Vagina (tissue), 2 donors: ENCODE measurements at regions of chr14 and their contacts with region 1.

Region 1: GRCh38 chr14:69818757-69819191 is 21.7 kb upstream of the SLC10A1 start:
- DNase-seq: no peak
- H3K4me3 ChIP-seq: no peak overlapping the region
- H3K27ac ChIP-seq: no peak overlapping the region
- H3K4me1 ChIP-seq: no peaks in the 10 kb centered on the region
- H3K27me3 ChIP-seq: no peaks in the 10 kb centered on the region
- CTCF ChIP-seq: peak; percentile 62 to 86 (median 83)
- POLR2A ChIP-seq: no peak

Region 2: DNA sequence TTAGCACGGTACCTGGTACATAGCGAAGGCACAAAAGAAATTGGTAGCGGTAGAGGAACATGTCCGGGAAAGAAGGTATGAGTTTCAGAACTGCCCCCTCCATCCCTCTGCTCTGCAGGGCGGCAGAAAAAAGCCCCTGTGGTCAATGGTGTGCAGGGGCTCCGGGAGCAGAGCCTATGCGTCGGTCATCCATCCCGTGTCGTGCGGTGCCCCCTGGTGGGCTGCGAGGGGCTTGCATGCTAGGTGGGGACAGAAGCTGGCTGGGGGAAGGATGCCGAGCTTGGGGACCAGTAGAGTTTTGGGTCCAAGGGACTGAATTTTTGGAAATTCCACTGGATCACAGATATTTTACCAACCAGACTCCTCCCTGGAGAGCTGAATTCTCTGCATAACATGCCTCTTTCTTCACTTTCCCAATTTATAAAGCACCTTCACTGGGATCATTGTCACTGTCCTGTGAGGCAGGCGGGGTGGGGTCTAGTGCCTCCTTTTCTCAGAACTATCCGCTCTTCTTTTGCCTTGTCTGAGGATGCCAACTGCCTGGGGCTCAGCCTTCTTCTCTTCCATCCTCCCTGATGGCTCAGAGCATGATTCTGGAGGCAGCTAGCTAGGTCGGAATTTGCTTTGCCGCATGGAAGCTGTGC is 209.1 kb after region 1 on chr14:
- intact Hi-C with region 1: loop called (anchors 2 kb)
- DNase-seq: no peak
- H3K4me3 ChIP-seq: no peak overlapping the region
- H3K27ac ChIP-seq: no peak overlapping the region
- H3K4me1 ChIP-seq: no peaks in the 10 kb centered on the region
- H3K27me3 ChIP-seq: no peaks in the 10 kb centered on the region
- CTCF ChIP-seq: peak; percentile 67 to 74 (median 72)
- POLR2A ChIP-seq: no peak